Activated naive CD4-positive, alpha-beta T cell treated with anti-CD3 and anti-CD28 coated beads for 36 hours (primary cell): ENCODE measurements at regions of chr3 and their contacts with region 1.

Region 1: GRCh38 chr3:189041482-189042090 is 130.2 kb upstream of the TPRG1 start:
- DNase-seq: peak; percentile 90
- H3K4me3 Mint-ChIP-seq: no peak overlapping the region
- H3K27ac Mint-ChIP-seq: no peak overlapping the region
- H3K4me1 Mint-ChIP-seq: peaks cover 29% of the 10 kb centered on the region
- H3K27me3 Mint-ChIP-seq: peaks cover 3% of the 10 kb centered on the region

Region 2: GRCh38 chr3:188830893-188831292 is 210.7 kb before region 1 on chr3:
- CTCF ChIA-PET with region 1: no interaction called
- intact Hi-C with region 1: loop called (anchors 5 kb)
- DNase-seq: peak; percentile 7
- H3K4me3 Mint-ChIP-seq: no peak overlapping the region
- H3K27ac Mint-ChIP-seq: no peak overlapping the region
- H3K4me1 Mint-ChIP-seq: peaks cover 21% of the 10 kb centered on the region
- H3K27me3 Mint-ChIP-seq: no peaks in the 10 kb centered on the region

Region 3: DNA sequence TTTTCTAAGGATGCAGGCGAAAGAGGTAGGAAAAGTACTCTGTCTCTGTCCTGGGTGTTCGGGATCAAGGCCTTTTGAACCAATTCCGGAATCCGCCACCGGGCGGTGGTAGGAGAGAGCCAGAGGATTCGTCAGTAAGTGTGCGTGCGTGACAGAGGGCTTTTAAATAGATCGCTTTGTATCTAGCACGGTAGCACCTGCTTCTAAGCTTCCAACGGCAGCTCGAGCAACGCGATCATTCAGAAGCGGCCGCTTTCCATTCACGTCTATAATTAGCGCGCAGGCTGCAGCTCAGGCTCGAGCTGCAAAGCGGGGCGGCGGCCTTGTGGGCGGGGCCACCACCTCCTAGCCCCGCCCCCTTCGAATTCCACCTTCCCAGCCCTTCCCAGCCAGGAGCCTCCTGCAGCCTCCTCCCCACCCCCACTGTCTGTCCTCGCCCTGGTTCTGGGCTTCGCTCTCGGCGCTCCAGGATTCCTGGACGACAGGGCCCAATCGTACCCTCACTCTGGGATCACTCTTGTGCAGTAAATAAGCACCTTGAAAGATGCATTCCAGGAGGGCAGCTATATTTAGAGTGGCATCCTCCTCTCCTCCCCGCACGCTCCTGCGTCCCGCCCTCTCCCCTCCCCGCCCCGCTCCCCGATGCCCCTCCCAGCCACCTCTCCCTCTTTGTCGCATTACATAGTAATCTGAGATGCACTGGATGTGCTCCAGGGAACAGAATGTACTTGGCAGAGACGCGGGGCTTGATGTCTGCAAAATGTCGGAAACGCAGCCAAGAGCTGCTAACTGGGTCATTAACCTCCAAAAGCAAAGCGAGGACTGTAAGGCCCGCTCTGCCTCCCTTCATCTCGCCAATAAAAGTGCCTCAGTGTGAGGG is 93.9 kb before region 1 on chr3:
- CTCF ChIA-PET with region 1: interaction called, 5 read pairs
- intact Hi-C with region 1: loop called (anchors 2 kb)
- DNase-seq: peak; percentile 61
- H3K4me3 Mint-ChIP-seq: no peak overlapping the region
- H3K27ac Mint-ChIP-seq: no peak overlapping the region
- H3K4me1 Mint-ChIP-seq: peaks cover 35% of the 10 kb centered on the region
- H3K27me3 Mint-ChIP-seq: peaks cover 18% of the 10 kb centered on the region

Region 4: GRCh38 chr3:189071441-189071840 is 29.9 kb after region 1 on chr3:
- CTCF ChIA-PET with region 1: interaction called, 8 read pairs
- intact Hi-C with region 1: loop called (anchors 1 kb)
- DNase-seq: peak; percentile 7
- H3K4me3 Mint-ChIP-seq: no peak overlapping the region
- H3K27ac Mint-ChIP-seq: no peak overlapping the region
- H3K4me1 Mint-ChIP-seq: peaks cover 6% of the 10 kb centered on the region
- H3K27me3 Mint-ChIP-seq: no peaks in the 10 kb centered on the region

Region 5: GRCh38 chr3:189132231-189132707 is 90.7 kb after region 1 on chr3:
- CTCF ChIA-PET with region 1: interaction called, 5 read pairs
- intact Hi-C with region 1: loop called (anchors 1 kb)
- DNase-seq: peak; percentile 91
- H3K4me3 Mint-ChIP-seq: peak overlapping the region; percentile 41
- H3K27ac Mint-ChIP-seq: peak overlapping the region; percentile 76
- H3K4me1 Mint-ChIP-seq: peaks cover 21% of the 10 kb centered on the region
- H3K27me3 Mint-ChIP-seq: no peaks in the 10 kb centered on the region

Region 6: DNA sequence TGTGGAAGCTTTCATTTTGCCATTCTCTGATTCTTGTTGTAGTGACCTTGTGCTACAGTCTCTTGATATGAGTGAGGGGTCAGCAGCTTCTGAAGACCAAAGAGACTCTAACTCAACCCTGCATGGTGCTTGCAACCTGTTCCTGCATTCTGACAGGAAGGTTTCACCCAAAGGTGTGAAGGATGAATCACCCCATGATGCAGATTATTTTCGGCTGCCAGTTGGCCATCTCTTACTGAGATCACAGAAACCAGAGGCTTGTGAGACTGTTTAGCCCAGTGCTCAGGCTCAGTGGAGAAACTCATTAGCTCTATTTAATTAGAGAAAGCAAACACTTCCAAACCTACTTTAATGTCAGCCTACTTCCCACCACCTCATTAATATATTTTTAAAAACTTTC is 100.9 kb after region 1 on chr3:
- CTCF ChIA-PET with region 1: interaction called, 10 read pairs
- intact Hi-C with region 1: no loop called
- DNase-seq: peak; percentile 61
- H3K4me3 Mint-ChIP-seq: no peak overlapping the region
- H3K27ac Mint-ChIP-seq: no peak overlapping the region
- H3K4me1 Mint-ChIP-seq: peaks cover 12% of the 10 kb centered on the region
- H3K27me3 Mint-ChIP-seq: peaks cover 3% of the 10 kb centered on the region

Region 7: GRCh38 chr3:189570916-189571315 is 529.3 kb after region 1 on chr3:
- CTCF ChIA-PET with region 1: no interaction called
- intact Hi-C with region 1: loop called (anchors 10 kb)
- DNase-seq: no peak
- H3K4me3 Mint-ChIP-seq: no peak overlapping the region
- H3K27ac Mint-ChIP-seq: no peak overlapping the region
- H3K4me1 Mint-ChIP-seq: peaks cover 30% of the 10 kb centered on the region
- H3K27me3 Mint-ChIP-seq: no peaks in the 10 kb centered on the region